ENCODE measurements at regions of chr5 and their contacts with region 1.

Region 1: GRCh38 chr5:132369474-132370180 is at the start of gene SLC22A5:
- DNase-seq: peak in 1 of 2 donors; percentile 91
- H3K4me3 ChIP-seq: peak within 1 kb of the TSS; percentile 58 to 74
- H3K27ac ChIP-seq: peak within 1 kb of the TSS; percentile 87
- H3K4me1 ChIP-seq: peaks cover 38% of the 10 kb centered on the region
- H3K27me3 ChIP-seq: no peaks in the 10 kb centered on the region
- CTCF ChIP-seq: no peak
- POLR2A ChIP-seq: no peak
- total RNA-seq, gene SLC22A5: 15.2 TPM

Region 2: DNA sequence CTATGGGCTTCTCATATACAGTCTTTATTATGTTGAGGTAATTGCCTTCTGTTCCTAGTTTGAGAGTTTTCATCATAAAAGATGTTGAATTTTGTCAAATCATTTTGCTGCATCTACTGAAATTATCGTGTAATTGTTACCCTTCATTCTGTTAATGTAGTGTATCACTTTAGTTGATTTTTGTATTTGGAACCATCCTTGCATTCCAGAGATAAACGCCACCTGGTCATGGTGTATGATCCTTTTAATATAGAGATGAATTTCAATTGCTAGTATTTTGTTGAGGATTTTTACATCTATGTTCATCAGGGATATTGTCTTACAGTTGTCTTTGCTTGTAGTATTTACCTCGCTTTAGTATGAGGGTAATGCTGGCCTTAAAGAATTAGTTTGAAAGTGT is 443.5 kb before region 1 on chr5:
- intact Hi-C with region 1: no loop called
- DNase-seq: no peak
- H3K4me3 ChIP-seq: no peak overlapping the region
- H3K27ac ChIP-seq: no peak overlapping the region
- H3K4me1 ChIP-seq: no peaks in the 10 kb centered on the region
- H3K27me3 ChIP-seq: no peaks in the 10 kb centered on the region
- CTCF ChIP-seq: no peak
- POLR2A ChIP-seq: no peak

Region 3: GRCh38 chr5:132260714-132261551 is 108.7 kb before region 1 on chr5:
- intact Hi-C with region 1: loop called (anchors 10 kb)
- DNase-seq: peak in 1 of 2 donors; percentile 87
- H3K4me3 ChIP-seq: no peak overlapping the region
- H3K27ac ChIP-seq: peak overlapping the region; percentile 99
- H3K4me1 ChIP-seq: peaks cover 94% of the 10 kb centered on the region
- H3K27me3 ChIP-seq: no peaks in the 10 kb centered on the region
- CTCF ChIP-seq: no peak
- POLR2A ChIP-seq: no peak

Region 4: GRCh38 chr5:132394667-132395259 is 25.1 kb after region 1 on chr5:
- intact Hi-C with region 1: no loop called
- DNase-seq: no peak
- H3K4me3 ChIP-seq: no peak overlapping the region
- H3K27ac ChIP-seq: no peak overlapping the region
- H3K4me1 ChIP-seq: peaks cover 29% of the 10 kb centered on the region
- H3K27me3 ChIP-seq: no peaks in the 10 kb centered on the region
- CTCF ChIP-seq: no peak
- POLR2A ChIP-seq: no peak

Region 5: DNA sequence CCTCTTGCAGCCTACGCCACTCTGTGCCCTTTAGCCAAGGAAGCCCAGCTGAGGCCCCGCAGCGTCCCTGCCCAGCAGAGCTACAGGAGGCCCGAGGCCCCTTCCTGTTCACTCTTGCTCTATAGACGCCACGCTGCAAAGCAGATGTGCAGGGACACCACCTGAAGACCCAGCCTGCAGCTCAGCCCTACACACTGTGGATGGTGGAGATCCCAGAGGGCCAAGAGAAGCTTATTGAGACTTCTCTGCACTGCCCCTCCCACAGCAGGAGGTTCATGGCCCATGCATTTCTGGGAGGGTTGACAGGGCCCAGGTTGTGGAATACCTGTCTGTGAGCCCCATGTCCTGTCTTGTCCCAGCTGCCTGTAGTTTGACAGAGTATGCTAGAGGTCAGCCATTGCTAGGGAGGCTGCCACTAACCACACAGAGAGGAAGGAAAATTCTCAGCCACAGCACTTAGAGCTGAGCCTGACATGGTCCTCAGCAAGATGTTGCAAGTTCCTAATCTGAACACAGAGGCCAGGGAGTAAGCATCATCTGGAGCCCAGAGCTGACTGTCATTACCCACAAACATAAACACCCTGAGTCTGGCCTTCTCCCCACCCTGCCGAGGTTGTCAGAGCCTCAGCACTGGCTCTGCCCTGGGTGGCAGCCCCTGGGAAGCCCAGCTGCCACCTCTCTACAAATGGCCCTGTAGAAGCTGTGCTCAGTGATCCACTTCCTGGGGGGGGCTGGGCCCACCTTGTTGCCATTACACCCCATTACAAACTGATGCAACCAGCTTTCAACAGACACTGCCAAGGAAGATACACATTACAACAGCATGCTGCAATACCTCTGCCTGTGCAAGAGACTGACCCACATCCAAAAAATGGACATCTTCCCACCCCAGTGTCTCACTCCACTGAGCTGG is 87.6 kb after region 1 on chr5:
- intact Hi-C with region 1: no loop called
- DNase-seq: no peak
- H3K4me3 ChIP-seq: no peak overlapping the region
- H3K27ac ChIP-seq: peak overlapping the region; percentile 72
- H3K4me1 ChIP-seq: peaks cover 45% of the 10 kb centered on the region
- H3K27me3 ChIP-seq: no peaks in the 10 kb centered on the region
- CTCF ChIP-seq: no peak
- POLR2A ChIP-seq: no peak